PC-3 (cell line): ENCODE measurements at regions of chr12 and their contacts with region 1.

Region 1: GRCh38 chr12:16359512-16360491 is 12.4 kb downstream of the MGST1 start:
- DNase-seq: peak; percentile 62
- ATAC-seq: peak; percentile 73
- H3K4me3 ChIP-seq: no peak overlapping the region
- H3K27ac ChIP-seq: no peak overlapping the region
- H3K4me1 ChIP-seq: no peaks in the 10 kb centered on the region
- H3K27me3 ChIP-seq: no peaks in the 10 kb centered on the region
- CTCF ChIP-seq: peak; percentile 87

Region 2: GRCh38 chr12:16076553-16076952 is 283.2 kb before region 1 on chr12:
- CTCF ChIA-PET with region 1: no interaction called
- POLR2A ChIA-PET with region 1: no interaction called
- intact Hi-C with region 1: loop called (anchors 1 kb)
- DNase-seq: peak; percentile 66
- ATAC-seq: peak; percentile 64
- H3K4me3 ChIP-seq: no peak overlapping the region
- H3K27ac ChIP-seq: no peak overlapping the region
- H3K4me1 ChIP-seq: no peaks in the 10 kb centered on the region
- H3K27me3 ChIP-seq: peaks cover 10% of the 10 kb centered on the region; the same call in 1 of the 2 replicates
- CTCF ChIP-seq: peak; percentile 69

Region 3: GRCh38 chr12:16165506-16165905 is 194.3 kb before region 1 on chr12:
- CTCF ChIA-PET with region 1: no interaction called
- POLR2A ChIA-PET with region 1: interaction called, 4 read pairs
- intact Hi-C with region 1: loop called (anchors 1 kb)
- DNase-seq: peak; percentile 58
- ATAC-seq: peak; percentile 59
- H3K4me3 ChIP-seq: no peak overlapping the region
- H3K27ac ChIP-seq: no peak overlapping the region
- H3K4me1 ChIP-seq: no peaks in the 10 kb centered on the region; the same call in 1 of the 2 replicates
- H3K27me3 ChIP-seq: peaks cover 13% of the 10 kb centered on the region; the same call in 1 of the 2 replicates
- CTCF ChIP-seq: peak; percentile 69

Region 4: GRCh38 chr12:16189849-16190248 is 170.0 kb before region 1 on chr12:
- CTCF ChIA-PET with region 1: no interaction called
- POLR2A ChIA-PET with region 1: no interaction called
- intact Hi-C with region 1: loop called (anchors 1 kb)
- DNase-seq: peak; percentile 68
- ATAC-seq: peak; percentile 78
- H3K4me3 ChIP-seq: no peak overlapping the region
- H3K27ac ChIP-seq: no peak overlapping the region
- H3K4me1 ChIP-seq: no peaks in the 10 kb centered on the region
- H3K27me3 ChIP-seq: no peaks in the 10 kb centered on the region
- CTCF ChIP-seq: peak; percentile 73

Region 5: GRCh38 chr12:16454482-16454881 is 94.7 kb after region 1 on chr12:
- CTCF ChIA-PET with region 1: no interaction called
- POLR2A ChIA-PET with region 1: no interaction called
- intact Hi-C with region 1: no loop called
- DNase-seq: no peak
- ATAC-seq: no peak
- H3K4me3 ChIP-seq: no peak overlapping the region
- H3K27ac ChIP-seq: no peak overlapping the region
- H3K4me1 ChIP-seq: no peaks in the 10 kb centered on the region; the same call in 1 of the 2 replicates
- H3K27me3 ChIP-seq: no peaks in the 10 kb centered on the region
- CTCF ChIP-seq: no peak